GM12878 (cell line): ENCODE measurements at regions of chr2 and their contacts with region 1.

Region 1: GRCh38 chr2:42792583-42793333 is at the start of gene HAAO:
- DNase-seq: no peak
- ATAC-seq: peak; percentile 40
- H3K4me3 ChIP-seq: peak within 1 kb of the TSS; percentile 82
- H3K27ac ChIP-seq: peak within 1 kb of the TSS; percentile 99
- H3K4me1 ChIP-seq: peaks cover 32% of the 10 kb centered on the region
- H3K27me3 ChIP-seq: no peaks in the 10 kb centered on the region
- CTCF ChIP-seq: peak; percentile 9 to 27 (median 12); a peak in 1 of 6 replicates
- EP300 ChIP-seq: no peak
- POLR2A ChIP-seq: peak; percentile 69
- RAD21 ChIP-seq: no peak
- polyA plus RNA-seq, gene HAAO: 4.3 to 6.9 TPM

Region 2: DNA sequence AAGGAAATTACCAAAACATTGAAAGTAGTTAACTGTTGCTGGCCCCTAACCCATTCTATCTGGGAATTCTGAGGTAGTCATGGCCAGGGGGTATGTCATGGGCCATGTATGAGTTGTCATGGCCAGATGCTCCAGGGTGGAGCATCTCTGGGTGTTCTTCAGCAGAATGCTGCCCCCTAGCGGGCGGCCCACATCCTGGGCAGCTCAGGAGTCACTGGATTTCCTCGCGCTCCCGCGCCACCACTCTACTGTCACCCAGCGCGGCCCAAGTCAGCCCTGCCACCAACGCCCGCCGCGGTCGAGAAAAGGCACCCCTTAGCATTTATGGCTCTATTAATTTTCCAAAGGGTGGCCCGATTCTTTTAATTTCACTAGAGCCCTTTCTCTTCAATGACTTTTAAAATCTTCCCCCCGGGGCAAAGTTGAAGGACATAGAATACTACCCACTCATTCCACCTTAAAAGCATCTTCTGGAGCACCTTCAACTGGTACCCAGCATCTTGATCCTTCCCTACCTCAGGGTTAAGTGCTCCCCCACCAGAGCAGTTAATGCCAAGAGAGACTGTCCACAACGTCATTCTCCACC is 703.3 kb before region 1 on chr2:
- CTCF ChIA-PET with region 1: no interaction called
- POLR2A ChIA-PET with region 1: no interaction called
- RAD21 ChIA-PET with region 1: no interaction called
- SMC1A ChIA-PET with region 1: no interaction called
- in situ Hi-C with region 1: no loop called
- intact Hi-C with region 1: no loop called
- DNase-seq: no peak
- ATAC-seq: peak; percentile 96
- H3K4me3 ChIP-seq: no peak overlapping the region
- H3K27ac ChIP-seq: no peak overlapping the region
- H3K4me1 ChIP-seq: no peaks in the 10 kb centered on the region
- H3K27me3 ChIP-seq: 0 out of 4 replicates have a peak, but pooled peaks cover 0 to 3% of the 10 kb centered on the region in 2 experiments
- CTCF ChIP-seq: peak; percentile 66 to 74 (median 70)
- EP300 ChIP-seq: no peak
- POLR2A ChIP-seq: no peak
- RAD21 ChIP-seq: peak; percentile 42

Region 3: DNA sequence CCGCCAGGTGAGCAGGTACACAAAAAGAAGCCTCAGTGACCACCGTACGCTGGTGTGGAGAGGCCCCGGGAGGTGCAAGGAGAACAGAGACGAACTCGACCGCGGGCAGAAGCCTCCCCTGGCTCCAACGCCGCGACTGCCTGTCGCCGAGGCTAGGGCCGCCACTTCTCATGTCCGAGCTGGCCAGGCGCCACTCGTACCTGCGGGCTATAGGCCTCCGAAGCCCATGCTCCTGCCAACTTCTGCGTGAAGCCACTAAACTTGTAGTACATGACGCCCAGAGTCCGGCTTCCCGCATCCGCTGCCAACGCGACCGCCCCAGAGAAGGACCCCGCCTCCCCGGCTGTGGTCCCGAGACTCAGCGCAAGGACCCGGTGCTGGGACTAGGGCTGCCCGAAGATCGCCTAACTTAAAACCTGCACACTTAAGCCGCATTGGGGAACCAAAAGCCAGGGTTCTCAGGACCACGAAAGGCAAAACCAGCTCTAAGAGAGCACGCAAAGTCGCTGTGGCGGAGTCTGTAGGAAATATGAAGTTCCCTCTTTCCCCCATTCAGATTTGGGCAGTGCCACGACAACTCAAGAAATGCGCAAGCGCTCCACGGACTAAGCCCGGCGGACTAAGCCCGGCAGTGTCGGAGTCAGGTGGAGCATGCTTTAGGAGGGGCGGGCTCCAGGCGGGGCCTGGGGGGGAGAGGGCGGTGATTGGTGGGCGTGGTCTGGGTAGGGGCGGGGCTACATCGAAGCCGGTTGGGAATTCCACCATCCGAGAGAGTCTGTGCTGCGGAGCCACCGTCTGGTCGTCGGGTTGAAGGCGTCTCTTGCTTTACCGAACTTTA is 431.6 kb before region 1 on chr2 and contains the start of gene COX7A2L:
- CTCF ChIA-PET with region 1: no interaction called
- POLR2A ChIA-PET with region 1: no interaction called
- RAD21 ChIA-PET with region 1: no interaction called
- SMC1A ChIA-PET with region 1: no interaction called
- in situ Hi-C with region 1: no loop called
- intact Hi-C with region 1: loop called (anchors 10 kb)
- DNase-seq: peak; percentile 86
- ATAC-seq: peak; percentile 95
- H3K4me3 ChIP-seq: peak within 1 kb of the TSS; percentile 97
- H3K27ac ChIP-seq: peak within 1 kb of the TSS; percentile 97
- H3K4me1 ChIP-seq: peaks cover 10% of the 10 kb centered on the region
- H3K27me3 ChIP-seq: no peaks in the 10 kb centered on the region
- CTCF ChIP-seq: peak in 2 of 3 experiments; percentile 31 to 70; a peak in 3 of 6 replicates
- EP300 ChIP-seq: 0 out of 4 replicates have a peak, but pooled peaks of 1 of the 2 experiments have one; percentile 31
- POLR2A ChIP-seq: peak; percentile 89
- RAD21 ChIP-seq: peak; percentile 33; the same call in 1 of the 2 replicates
- polyA plus RNA-seq, gene COX7A2L: 432 to 532 TPM

Region 4: DNA sequence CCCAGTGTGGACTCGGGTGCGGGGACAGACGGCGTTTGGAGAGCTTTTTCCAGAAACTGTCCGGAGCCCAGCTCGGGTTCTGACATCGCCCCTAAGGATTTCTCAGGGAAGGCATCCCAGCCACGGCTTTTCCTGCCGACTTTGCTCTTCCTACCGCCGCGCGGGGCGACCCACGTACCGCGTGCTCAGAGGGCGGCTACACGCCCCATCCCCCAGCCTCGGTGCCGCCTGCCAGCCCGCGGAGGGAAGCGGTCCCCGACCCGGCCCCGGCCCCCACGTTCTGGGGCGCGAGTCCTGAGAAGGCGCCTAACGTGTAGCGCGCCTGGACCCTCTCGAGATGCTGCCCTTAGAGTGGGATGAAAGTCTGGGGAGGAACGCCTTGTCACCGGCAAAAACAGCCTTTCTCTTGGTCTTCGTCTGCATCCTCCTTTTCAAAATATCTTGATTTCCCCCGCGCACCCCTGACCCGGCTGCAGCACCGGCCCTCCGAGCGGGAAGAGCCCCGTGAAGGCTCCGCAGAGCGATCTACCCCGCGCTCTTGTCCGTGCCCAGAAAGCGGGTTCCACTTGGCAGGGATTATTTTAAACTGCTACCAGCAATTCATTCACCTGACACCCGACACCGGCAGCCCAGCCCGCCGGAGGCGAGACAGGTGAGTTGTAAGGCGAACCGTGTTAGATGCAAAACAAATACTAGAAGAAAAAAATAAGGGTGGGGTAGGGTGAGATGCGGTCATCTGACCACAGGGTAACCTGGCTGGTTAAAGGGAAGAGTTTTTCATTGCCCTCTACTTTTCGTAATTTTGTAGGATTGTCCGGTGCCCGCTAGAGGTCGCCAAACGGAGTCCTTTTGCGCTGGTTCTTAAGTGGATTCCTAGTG is 298.2 kb before region 1 on chr2:
- CTCF ChIA-PET with region 1: no interaction called
- POLR2A ChIA-PET with region 1: no interaction called
- RAD21 ChIA-PET with region 1: no interaction called
- SMC1A ChIA-PET with region 1: no interaction called
- in situ Hi-C with region 1: no loop called
- intact Hi-C with region 1: loop called (anchors 10 kb)
- DNase-seq: peak; percentile 35
- ATAC-seq: peak; percentile 90
- H3K4me3 ChIP-seq: peak overlapping the region; percentile 76
- H3K27ac ChIP-seq: no peak overlapping the region
- H3K4me1 ChIP-seq: no peaks in the 10 kb centered on the region
- H3K27me3 ChIP-seq: peaks cover 3 to 13% of the 10 kb centered on the region in 2 experiments
- CTCF ChIP-seq: peak; percentile 83 to 90 (median 89)
- EP300 ChIP-seq: no peak
- POLR2A ChIP-seq: no peak
- RAD21 ChIP-seq: peak; percentile 91

Region 5: GRCh38 chr2:42722320-42723190 is 70.2 kb before region 1 on chr2:
- CTCF ChIA-PET with region 1: interaction called, 16 read pairs
- POLR2A ChIA-PET with region 1: interaction called, 12 read pairs
- RAD21 ChIA-PET with region 1: interaction called, 20 read pairs
- SMC1A ChIA-PET with region 1: interaction called, 21 read pairs
- in situ Hi-C with region 1: no loop called
- intact Hi-C with region 1: loop called (anchors 5 kb)
- DNase-seq: peak; percentile 91
- ATAC-seq: peak; percentile 98
- H3K4me3 ChIP-seq: peak overlapping the region; percentile 10; the same call in 1 of the 2 replicates
- H3K27ac ChIP-seq: peak overlapping the region; percentile 86
- H3K4me1 ChIP-seq: peaks cover 19% of the 10 kb centered on the region
- H3K27me3 ChIP-seq: no peaks in the 10 kb centered on the region
- CTCF ChIP-seq: no peak
- EP300 ChIP-seq: peak; percentile 97
- POLR2A ChIP-seq: no peak
- RAD21 ChIP-seq: 0 out of 2 replicates have a peak, but pooled peaks have one; percentile 23

Region 6: DNA sequence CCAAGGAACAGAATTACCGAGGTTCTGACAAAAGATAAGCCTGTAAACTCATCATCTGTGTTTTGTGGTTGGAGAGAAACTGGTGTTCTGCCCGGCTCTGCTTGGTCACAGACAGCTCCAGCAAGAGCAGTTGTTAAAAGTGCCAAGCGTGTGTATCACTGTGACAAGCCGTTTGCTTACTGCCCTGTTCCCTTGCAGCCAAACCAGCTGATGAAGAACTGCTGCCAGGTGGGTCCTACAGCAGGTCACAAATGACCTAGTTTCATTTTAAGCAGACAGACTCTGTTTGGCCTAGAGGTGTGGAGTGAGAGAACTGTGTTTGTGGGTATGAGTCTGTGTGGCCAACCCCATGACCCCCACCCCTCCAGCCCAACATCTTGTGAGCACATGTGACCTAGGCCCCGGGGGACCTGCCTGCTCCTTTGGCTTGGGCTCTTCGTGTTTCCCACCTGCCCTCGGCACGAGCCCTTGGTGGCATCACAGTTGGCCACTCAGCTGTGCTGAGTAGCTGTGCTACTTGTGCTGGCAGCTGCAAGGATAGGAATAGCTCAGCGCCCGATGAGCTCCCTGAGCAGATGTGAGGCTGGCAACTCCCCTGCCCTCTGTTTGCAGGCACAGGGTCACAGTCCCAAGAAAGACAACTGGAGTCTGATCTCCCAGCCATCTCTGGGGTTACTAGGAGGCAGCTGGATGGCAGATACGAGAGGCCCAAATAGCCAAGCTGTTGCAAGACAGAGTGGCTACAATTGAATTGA is 38.6 kb before region 1 on chr2:
- CTCF ChIA-PET with region 1: interaction called, 9 read pairs
- POLR2A ChIA-PET with region 1: interaction called, 30 read pairs
- RAD21 ChIA-PET with region 1: interaction called, 39 read pairs
- SMC1A ChIA-PET with region 1: interaction called, 60 read pairs
- in situ Hi-C with region 1: no loop called
- intact Hi-C with region 1: loop called (anchors 2 kb)
- DNase-seq: peak; percentile 76
- ATAC-seq: peak; percentile 80
- H3K4me3 ChIP-seq: no peak overlapping the region
- H3K27ac ChIP-seq: peak overlapping the region; percentile 24
- H3K4me1 ChIP-seq: peaks cover 52% of the 10 kb centered on the region
- H3K27me3 ChIP-seq: no peaks in the 10 kb centered on the region
- CTCF ChIP-seq: no peak
- EP300 ChIP-seq: peak; percentile 27 to 63; a peak in 1 of 4 replicates
- POLR2A ChIP-seq: no peak
- RAD21 ChIP-seq: no peak

Region 7: GRCh38 chr2:42775186-42775585 is 17.6 kb before region 1 on chr2:
- CTCF ChIA-PET with region 1: interaction called, 5 read pairs
- POLR2A ChIA-PET with region 1: interaction called, 8 read pairs
- RAD21 ChIA-PET with region 1: interaction called, 10 read pairs
- SMC1A ChIA-PET with region 1: interaction called, 11 read pairs
- in situ Hi-C with region 1: no loop called
- intact Hi-C with region 1: no loop called
- DNase-seq: no peak
- ATAC-seq: peak; percentile 51
- H3K4me3 ChIP-seq: peak overlapping the region; percentile 13; the same call in 1 of the 2 replicates
- H3K27ac ChIP-seq: peak overlapping the region; percentile 63
- H3K4me1 ChIP-seq: peaks cover 5% of the 10 kb centered on the region
- H3K27me3 ChIP-seq: no peaks in the 10 kb centered on the region
- CTCF ChIP-seq: no peak
- EP300 ChIP-seq: no peak
- POLR2A ChIP-seq: no peak
- RAD21 ChIP-seq: no peak

Region 8: GRCh38 chr2:42810121-42810970 is 17.6 kb after region 1 on chr2:
- CTCF ChIA-PET with region 1: interaction called, 69 read pairs
- POLR2A ChIA-PET with region 1: interaction called, 99 read pairs
- RAD21 ChIA-PET with region 1: interaction called, 96 read pairs
- SMC1A ChIA-PET with region 1: interaction called, 60 read pairs
- in situ Hi-C with region 1: no loop called
- intact Hi-C with region 1: loop called (anchors 1 kb)
- DNase-seq: peak; percentile 95
- ATAC-seq: peak; percentile 84
- H3K4me3 ChIP-seq: peak overlapping the region; percentile 68
- H3K27ac ChIP-seq: peak overlapping the region; percentile 97
- H3K4me1 ChIP-seq: peaks cover 9% of the 10 kb centered on the region
- H3K27me3 ChIP-seq: no peaks in the 10 kb centered on the region
- CTCF ChIP-seq: 0 out of 6 replicates have a peak, but pooled peaks of 1 of the 3 experiments have one; percentile 3
- EP300 ChIP-seq: peak; percentile 18 to 88; a peak in 1 of 4 replicates
- POLR2A ChIP-seq: peak; percentile 90
- RAD21 ChIP-seq: no peak